ENCODE measurements at regions of chr1 and their contacts with region 1.

Region 1: GRCh38 chr1:110495926-110496600 is 22.9 kb downstream of the KCNA10 start:
- DNase-seq: peak; percentile 75
- H3K4me3 ChIP-seq: no peak overlapping the region
- H3K27ac ChIP-seq: no peak overlapping the region
- H3K4me1 ChIP-seq: no peaks in the 10 kb centered on the region
- H3K27me3 ChIP-seq: peaks cover 0 to 7% of the 10 kb centered on the region in 2 experiments
- CTCF ChIP-seq: peak; percentile 77 to 85
- POLR2A ChIP-seq: no peak

Region 2: DNA sequence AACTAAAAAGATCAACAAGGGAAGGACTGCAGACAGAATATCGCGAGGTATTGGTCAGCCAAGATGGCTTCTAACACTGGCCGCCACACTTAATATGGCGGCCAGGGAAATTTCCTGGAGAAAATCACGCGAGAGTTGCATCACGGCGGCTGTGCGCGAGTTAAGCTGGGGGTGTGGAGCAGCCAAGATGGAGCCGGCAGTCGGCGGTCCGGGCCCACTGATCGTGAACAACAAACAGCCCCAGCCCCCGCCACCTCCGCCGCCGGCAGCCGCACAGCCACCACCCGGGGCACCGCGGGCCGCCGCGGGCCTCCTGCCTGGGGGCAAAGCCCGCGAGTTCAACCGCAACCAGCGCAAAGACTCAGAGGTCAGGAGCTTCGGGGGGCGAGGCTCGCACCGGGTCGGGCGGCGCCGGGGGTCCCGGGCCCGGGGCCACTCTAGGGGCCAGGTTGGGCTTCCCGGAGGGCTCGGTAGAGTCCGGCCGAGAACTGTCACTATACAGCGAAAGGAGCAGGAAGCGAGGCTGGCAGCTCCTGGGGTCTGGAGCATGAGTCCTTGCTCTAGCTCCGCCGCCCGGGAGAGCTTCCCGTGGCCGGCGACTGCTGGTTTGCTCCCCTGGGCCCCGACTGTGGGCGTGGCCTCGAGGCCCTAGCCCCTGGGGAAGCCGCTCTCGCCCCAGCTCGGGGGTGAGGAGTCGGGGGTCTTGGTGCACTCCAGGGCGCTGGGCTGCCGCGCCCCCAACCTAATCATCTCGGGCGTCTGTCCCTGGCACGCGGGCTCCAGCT is 461.4 kb before region 1 on chr1 and contains the start of gene STRIP1:
- CTCF ChIA-PET with region 1: interaction called, 17 read pairs
- POLR2A ChIA-PET with region 1: no interaction called
- dilution Hi-C with region 1: no loop called
- intact Hi-C with region 1: no loop called
- DNase-seq: peak; percentile 96
- H3K4me3 ChIP-seq: peak within 1 kb of the TSS; percentile 76 to 90 (median 82)
- H3K27ac ChIP-seq: peak within 1 kb of the TSS; percentile 61
- H3K4me1 ChIP-seq: peaks cover 9% of the 10 kb centered on the region
- H3K27me3 ChIP-seq: no peaks in the 10 kb centered on the region
- CTCF ChIP-seq: no peak
- POLR2A ChIP-seq: peak; percentile 74
- total RNA-seq, gene STRIP1: 38.9 and 42.1 TPM in 2 replicates

Region 3: GRCh38 chr1:110196917-110197765 is 298.9 kb before region 1 on chr1:
- CTCF ChIA-PET with region 1: interaction called, 140 read pairs
- POLR2A ChIA-PET with region 1: no interaction called
- dilution Hi-C with region 1: no loop called
- intact Hi-C with region 1: loop called (anchors 1 kb)
- DNase-seq: peak; percentile 34
- H3K4me3 ChIP-seq: no peak overlapping the region
- H3K27ac ChIP-seq: no peak overlapping the region
- H3K4me1 ChIP-seq: no peaks in the 10 kb centered on the region
- H3K27me3 ChIP-seq: no peaks in the 10 kb centered on the region
- CTCF ChIP-seq: peak; percentile 75 to 92
- POLR2A ChIP-seq: no peak

Region 4: DNA sequence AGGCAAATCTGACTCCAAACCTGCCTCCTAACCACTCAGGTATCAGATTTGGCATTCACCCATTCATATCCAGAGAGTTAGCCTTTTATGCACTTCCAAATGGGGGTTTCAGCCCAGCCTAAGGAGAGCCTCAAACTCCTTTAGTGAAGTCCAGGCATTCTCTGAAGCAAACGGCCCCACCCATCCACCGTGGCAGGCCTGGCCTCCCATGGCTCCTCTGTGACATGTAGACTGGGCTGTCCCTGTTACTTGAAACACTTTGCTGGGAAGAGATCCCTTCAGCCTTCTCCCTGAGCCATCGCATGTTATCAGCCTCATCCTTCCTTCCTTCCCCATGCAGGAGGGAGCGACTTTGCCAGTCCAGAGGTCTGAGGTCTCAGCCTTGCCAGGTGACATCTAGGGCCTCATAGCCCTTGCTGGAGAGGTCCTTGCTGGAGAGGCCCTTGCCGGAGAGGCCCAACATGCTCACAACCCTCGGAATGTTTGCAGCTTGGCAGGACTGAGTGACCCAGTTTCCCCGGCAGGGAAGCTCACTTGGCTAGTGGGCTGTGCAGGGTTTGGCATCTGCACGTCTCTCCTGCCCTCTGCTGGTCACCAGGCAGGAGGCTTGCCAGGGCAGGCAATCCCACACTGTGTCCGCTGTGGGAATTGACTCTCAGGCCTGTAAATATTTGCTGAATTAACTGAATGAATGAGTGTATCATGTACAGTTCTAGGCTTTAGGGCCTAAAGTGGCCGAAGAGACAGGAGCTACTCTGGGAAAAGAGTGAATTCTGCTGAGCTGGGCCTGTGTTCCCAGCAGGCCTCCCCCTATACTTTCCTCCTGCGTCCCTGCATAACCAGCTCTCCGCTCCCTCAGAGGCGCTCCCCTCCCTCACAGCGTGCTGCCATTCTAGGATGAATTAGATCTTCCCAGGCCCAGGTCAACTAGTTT is 183.6 kb before region 1 on chr1:
- CTCF ChIA-PET with region 1: interaction called, 58 read pairs
- POLR2A ChIA-PET with region 1: no interaction called
- dilution Hi-C with region 1: no loop called
- intact Hi-C with region 1: loop called (anchors 1 kb)
- DNase-seq: peak; percentile 70
- H3K4me3 ChIP-seq: no peak overlapping the region
- H3K27ac ChIP-seq: no peak overlapping the region
- H3K4me1 ChIP-seq: no peaks in the 10 kb centered on the region
- H3K27me3 ChIP-seq: no peaks in the 10 kb centered on the region
- CTCF ChIP-seq: peak; percentile 88 to 96
- POLR2A ChIP-seq: no peak

Region 5: DNA sequence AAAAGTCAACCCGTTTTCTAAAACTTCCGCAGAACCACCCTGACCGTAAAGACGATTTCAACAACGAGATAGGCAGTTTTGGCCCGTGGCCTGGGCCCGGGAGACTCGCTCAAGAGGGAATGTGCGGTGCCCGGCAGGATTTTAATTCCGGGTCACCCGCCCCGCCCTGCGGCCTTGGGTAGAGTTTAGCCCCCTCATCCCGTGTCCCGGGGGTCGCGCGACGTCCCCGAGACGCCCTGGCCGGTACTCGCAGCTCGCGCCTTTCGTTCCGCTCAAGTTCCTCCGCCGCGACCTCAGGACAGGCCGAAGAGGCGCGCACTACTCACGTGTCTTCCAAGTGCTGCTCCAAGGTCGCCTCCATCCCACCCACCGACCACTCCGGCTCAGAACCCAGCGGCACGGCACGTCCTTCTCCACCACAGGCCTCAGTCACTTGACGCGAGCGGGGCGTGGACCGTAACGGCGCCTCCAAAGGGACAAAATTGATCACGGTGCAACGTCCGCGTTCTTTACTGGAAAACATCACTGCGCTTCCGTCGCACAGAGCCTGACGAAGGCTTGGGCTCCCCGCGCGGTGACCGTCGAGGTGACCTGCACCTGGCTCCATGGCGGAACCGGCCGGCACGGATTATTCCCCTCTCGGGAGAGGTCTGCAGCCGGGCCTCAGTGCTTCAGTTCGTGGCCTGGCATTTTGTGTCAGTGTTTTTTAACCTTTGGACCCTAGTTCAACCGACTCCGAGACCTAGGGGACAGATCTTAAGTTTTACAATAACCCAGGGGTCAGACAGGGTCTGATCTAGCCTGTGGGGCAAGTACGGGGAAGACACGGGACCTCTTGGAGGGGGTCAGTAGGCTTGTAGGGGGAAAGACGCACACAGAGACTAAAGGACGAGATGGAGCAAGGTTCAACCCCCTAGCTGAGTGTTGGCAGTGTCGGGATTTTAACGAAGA is 88.5 kb before region 1 on chr1 and contains the start of gene LAMTOR5:
- CTCF ChIA-PET with region 1: interaction called, 120 read pairs
- POLR2A ChIA-PET with region 1: interaction called, 3 read pairs
- dilution Hi-C with region 1: no loop called
- intact Hi-C with region 1: loop called (anchors 1 kb)
- DNase-seq: peak; percentile 97
- H3K4me3 ChIP-seq: peak within 1 kb of the TSS; percentile 94 to 100 (median 95)
- H3K27ac ChIP-seq: peak within 1 kb of the TSS; percentile 69
- H3K4me1 ChIP-seq: peaks cover 9% of the 10 kb centered on the region
- H3K27me3 ChIP-seq: no peaks in the 10 kb centered on the region
- CTCF ChIP-seq: no peak
- POLR2A ChIP-seq: peak; percentile 92
- total RNA-seq, gene LAMTOR5: 137 and 150 TPM in 2 replicates

Region 6: DNA sequence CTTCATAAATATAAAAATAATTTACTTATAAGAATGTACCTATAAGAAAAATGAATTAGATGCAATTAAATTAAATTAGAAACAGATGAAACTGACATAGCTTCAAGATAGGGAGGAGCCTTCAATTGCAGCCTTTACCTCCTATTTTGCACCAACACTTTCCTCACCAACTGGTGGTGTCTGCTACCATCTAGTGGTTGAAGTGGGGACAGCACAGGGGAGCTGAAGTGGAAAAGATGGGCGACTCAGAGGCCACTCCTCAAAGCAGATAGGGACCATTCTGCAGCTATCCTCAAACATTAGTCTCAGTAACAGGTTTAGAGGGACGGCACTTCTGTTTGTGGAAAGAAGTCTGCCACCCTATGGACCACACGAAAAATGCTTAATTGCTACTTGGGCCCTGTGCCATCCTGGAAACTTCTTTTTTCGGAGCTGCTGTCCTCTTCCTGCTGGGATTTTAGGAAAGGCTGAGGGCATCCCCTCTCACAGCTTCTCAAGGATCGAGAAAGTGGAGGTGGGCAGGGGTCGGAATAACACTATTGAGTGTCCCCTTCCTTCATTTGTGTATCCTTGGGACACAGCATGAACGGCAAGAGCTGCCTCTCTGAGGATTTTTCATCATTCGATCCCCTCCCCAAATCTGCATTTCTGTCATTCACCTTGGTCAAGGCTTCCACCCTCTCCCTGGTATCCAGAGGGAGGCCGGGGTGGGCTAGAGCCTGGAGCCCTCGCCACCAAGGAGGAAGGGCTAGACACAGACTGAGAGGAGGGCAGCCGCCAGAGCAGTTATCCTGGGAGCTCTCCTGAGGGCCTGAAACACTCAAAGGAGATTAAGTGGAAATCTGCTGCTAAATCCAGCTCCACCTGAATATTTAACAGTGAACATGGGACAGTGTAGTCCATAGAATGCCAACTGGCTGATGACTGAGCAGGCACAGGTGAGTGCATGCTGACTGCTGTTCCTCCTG is 35.5 kb before region 1 on chr1:
- CTCF ChIA-PET with region 1: interaction called, 111 read pairs
- POLR2A ChIA-PET with region 1: no interaction called
- dilution Hi-C with region 1: no loop called
- intact Hi-C with region 1: loop called (anchors 1 kb)
- DNase-seq: peak; percentile 74
- H3K4me3 ChIP-seq: no peak overlapping the region
- H3K27ac ChIP-seq: no peak overlapping the region
- H3K4me1 ChIP-seq: no peaks in the 10 kb centered on the region
- H3K27me3 ChIP-seq: no peaks in the 10 kb centered on the region
- CTCF ChIP-seq: peak; percentile 90 to 91
- POLR2A ChIP-seq: no peak

Region 7: DNA sequence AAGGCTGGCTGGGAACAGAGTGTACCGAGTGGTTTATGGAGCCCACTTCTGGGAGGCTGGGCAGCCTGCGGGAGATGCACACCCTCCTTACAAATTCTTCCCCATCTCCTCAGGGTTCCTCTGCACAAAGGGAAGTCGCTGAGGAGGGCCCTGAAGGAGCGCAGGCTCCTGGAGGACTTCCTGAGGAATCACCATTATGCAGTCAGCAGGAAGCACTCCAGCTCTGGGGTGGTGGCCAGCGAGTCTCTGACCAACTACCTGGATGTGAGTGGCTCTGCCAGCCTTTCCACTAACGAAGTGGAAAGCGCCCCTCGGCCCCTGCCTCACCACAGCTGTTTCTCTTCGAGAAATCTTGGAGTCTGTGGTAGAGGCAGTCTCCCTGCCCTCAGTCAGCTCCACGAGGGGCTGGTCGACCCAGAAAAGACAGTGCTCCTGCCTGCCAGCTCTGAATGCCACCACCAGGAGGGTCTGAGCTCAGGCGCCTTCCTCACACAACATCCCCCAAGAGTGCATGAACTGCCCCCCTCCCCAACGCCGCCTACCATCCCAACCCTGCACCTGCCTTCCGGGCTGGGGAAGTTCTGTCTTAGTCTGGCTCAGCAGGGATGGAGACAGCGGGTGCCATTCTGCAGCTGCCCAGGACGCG is 13.3 kb before region 1 on chr1:
- CTCF ChIA-PET with region 1: interaction called, 68 read pairs
- POLR2A ChIA-PET with region 1: no interaction called
- dilution Hi-C with region 1: no loop called
- intact Hi-C with region 1: no loop called
- DNase-seq: no peak
- H3K4me3 ChIP-seq: no peak overlapping the region
- H3K27ac ChIP-seq: no peak overlapping the region
- H3K4me1 ChIP-seq: no peaks in the 10 kb centered on the region
- H3K27me3 ChIP-seq: no peaks in the 10 kb centered on the region
- CTCF ChIP-seq: no peak
- POLR2A ChIP-seq: no peak